ENCODE measurements at regions of chr12 and their contacts with region 1.

Region 1: GRCh38 chr12:95003213-95003920 is at the start of gene NDUFA12:
- DNase-seq: peak; percentile 91
- ATAC-seq: peak; percentile 99
- H3K4me3 ChIP-seq: peak within 1 kb of the TSS; percentile 85
- H3K27ac ChIP-seq: peak within 1 kb of the TSS; percentile 63
- H3K4me1 ChIP-seq: no peaks in the 10 kb centered on the region
- H3K27me3 ChIP-seq: no peaks in the 10 kb centered on the region
- CTCF ChIP-seq: no peak
- EP300 ChIP-seq: no peak
- POLR2A ChIP-seq: peak; percentile 95
- RAD21 ChIP-seq: 0 out of 2 replicates have a peak, but pooled peaks have one; percentile 14
- polyA plus RNA-seq, gene NDUFA12: 917 to 1,021 TPM

Region 2: GRCh38 chr12:94397401-94397800 is 606.0 kb before region 1 on chr12:
- CTCF ChIA-PET with region 1: no interaction called
- POLR2A ChIA-PET with region 1: no interaction called
- RAD21 ChIA-PET with region 1: no interaction called
- SMC1A ChIA-PET with region 1: no interaction called
- in situ Hi-C with region 1: no loop called
- intact Hi-C with region 1: no loop called
- DNase-seq: no peak
- ATAC-seq: no peak
- H3K4me3 ChIP-seq: no peak overlapping the region
- H3K27ac ChIP-seq: no peak overlapping the region
- H3K4me1 ChIP-seq: no peaks in the 10 kb centered on the region
- H3K27me3 ChIP-seq: no peaks in the 10 kb centered on the region
- CTCF ChIP-seq: no peak
- EP300 ChIP-seq: no peak
- POLR2A ChIP-seq: no peak
- RAD21 ChIP-seq: no peak

Region 3: DNA sequence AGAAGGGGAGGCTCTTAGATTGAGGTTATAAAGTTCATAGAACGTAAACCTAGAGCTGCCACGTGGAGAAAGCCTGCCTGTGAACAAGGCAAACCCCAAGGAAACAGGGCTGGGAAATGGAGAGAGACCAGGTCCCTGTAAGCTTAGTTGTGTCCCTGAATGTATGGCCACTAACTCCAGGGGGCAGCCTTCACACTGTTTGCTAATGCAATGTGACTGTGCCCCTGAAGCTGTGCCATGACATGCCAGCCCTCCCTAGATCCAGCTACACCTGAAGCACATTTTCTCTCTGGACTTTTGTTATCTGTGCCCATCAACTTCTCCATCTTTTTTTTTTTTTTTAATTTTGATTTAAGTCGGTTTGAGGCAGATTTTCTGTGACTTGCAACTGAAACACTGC is 292.4 kb before region 1 on chr12:
- CTCF ChIA-PET with region 1: no interaction called
- POLR2A ChIA-PET with region 1: no interaction called
- RAD21 ChIA-PET with region 1: no interaction called
- SMC1A ChIA-PET with region 1: no interaction called
- in situ Hi-C with region 1: no loop called
- intact Hi-C with region 1: no loop called
- DNase-seq: no peak
- ATAC-seq: peak; percentile 77
- H3K4me3 ChIP-seq: no peak overlapping the region
- H3K27ac ChIP-seq: no peak overlapping the region
- H3K4me1 ChIP-seq: peaks cover 7% of the 10 kb centered on the region
- H3K27me3 ChIP-seq: no peaks in the 10 kb centered on the region
- CTCF ChIP-seq: peak; percentile 48 to 55 (median 52); a peak in 5 of 6 replicates
- EP300 ChIP-seq: no peak
- POLR2A ChIP-seq: no peak
- RAD21 ChIP-seq: peak; percentile 54

Region 4: GRCh38 chr12:94990222-94990621 is 13.1 kb before region 1 on chr12:
- CTCF ChIA-PET with region 1: interaction called, 5 read pairs
- POLR2A ChIA-PET with region 1: interaction called, 8 read pairs
- RAD21 ChIA-PET with region 1: no interaction called
- SMC1A ChIA-PET with region 1: interaction called, 13 read pairs
- in situ Hi-C with region 1: no loop called
- intact Hi-C with region 1: no loop called
- DNase-seq: peak; percentile 41
- ATAC-seq: peak; percentile 52
- H3K4me3 ChIP-seq: no peak overlapping the region
- H3K27ac ChIP-seq: peak overlapping the region; percentile 34
- H3K4me1 ChIP-seq: no peaks in the 10 kb centered on the region; the same call in none of the 2 replicates
- H3K27me3 ChIP-seq: no peaks in the 10 kb centered on the region
- CTCF ChIP-seq: no peak
- EP300 ChIP-seq: no peak
- POLR2A ChIP-seq: no peak
- RAD21 ChIP-seq: no peak